Activated CD4-positive, alpha-beta T cell treated with anti-CD3 and anti-CD28 coated beads for 36 hours (primary cell): ENCODE measurements at regions of chr14 and their contacts with region 1.

Region 1: GRCh38 chr14:61694830-61695694 is at the start of gene HIF1A:
- DNase-seq: peak; percentile 99
- ATAC-seq: peak; percentile 87
- H3K4me3 Mint-ChIP-seq: peak within 1 kb of the TSS; percentile 99
- H3K27ac Mint-ChIP-seq: peak within 1 kb of the TSS; percentile 98
- H3K4me1 Mint-ChIP-seq: peaks cover 50% of the 10 kb centered on the region
- H3K27me3 Mint-ChIP-seq: no peaks in the 10 kb centered on the region
- total RNA-seq, gene HIF1A: 196 to 329 TPM

Region 2: GRCh38 chr14:61321385-61322010 is 373.6 kb before region 1 on chr14 and contains the start of gene PRKCH:
- CTCF ChIA-PET with region 1: no interaction called
- POLR2A ChIA-PET with region 1: no interaction called
- intact Hi-C with region 1: loop called (anchors 5 kb)
- DNase-seq: peak; percentile 90
- ATAC-seq: peak; percentile 63
- H3K4me3 Mint-ChIP-seq: peak within 1 kb of the TSS; percentile 92
- H3K27ac Mint-ChIP-seq: peak within 1 kb of the TSS; percentile 94
- H3K4me1 Mint-ChIP-seq: peaks cover 26% of the 10 kb centered on the region
- H3K27me3 Mint-ChIP-seq: no peaks in the 10 kb centered on the region
- total RNA-seq, gene PRKCH: 109 to 145 TPM

Region 3: DNA sequence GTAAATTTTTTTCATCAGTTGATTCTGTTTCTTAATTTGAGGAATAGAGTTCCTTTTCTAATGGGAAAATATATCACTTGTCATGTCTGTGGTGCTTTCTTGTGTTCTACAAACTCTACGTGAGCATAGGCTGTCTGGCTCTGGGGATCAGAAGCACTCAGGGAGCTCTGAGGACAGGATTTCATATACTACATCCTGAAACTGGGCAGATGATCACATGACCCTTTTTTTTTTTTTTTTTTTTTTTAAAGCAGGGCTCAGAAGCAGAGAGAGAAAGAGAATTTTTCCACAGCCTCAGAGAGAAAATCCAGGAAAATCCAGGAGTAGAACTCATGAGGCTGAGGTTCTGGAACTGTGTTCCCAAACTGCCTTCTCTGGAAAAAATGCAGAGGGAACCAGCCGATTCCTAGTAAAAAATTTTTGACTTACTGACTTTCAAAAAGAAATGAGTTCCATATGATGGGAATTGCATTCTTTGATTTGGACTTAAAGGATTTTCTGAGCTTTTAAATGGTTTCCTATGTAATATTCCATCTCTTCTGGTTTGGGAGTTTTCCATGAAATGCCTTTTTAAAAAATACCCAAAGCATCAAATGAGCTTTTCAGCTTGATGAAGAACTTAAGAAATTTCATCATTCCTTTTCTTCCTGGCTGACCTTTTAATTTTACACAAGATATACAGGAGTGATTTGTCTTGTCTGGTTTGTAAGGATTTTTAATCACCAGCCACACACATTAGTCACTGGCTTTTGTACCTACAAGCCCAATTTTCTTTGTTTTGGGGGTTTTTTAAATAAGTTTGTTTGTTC is 182.8 kb before region 1 on chr14:
- CTCF ChIA-PET with region 1: interaction called, 3 read pairs
- POLR2A ChIA-PET with region 1: interaction called, 3 read pairs
- intact Hi-C with region 1: loop called in 1 of 2 experiments (anchors 2 kb)
- DNase-seq: peak; percentile 44
- ATAC-seq: peak; percentile 59
- H3K4me3 Mint-ChIP-seq: peak overlapping the region; percentile 54
- H3K27ac Mint-ChIP-seq: peak overlapping the region; percentile 97
- H3K4me1 Mint-ChIP-seq: peaks cover 94% of the 10 kb centered on the region
- H3K27me3 Mint-ChIP-seq: no peaks in the 10 kb centered on the region

Region 4: DNA sequence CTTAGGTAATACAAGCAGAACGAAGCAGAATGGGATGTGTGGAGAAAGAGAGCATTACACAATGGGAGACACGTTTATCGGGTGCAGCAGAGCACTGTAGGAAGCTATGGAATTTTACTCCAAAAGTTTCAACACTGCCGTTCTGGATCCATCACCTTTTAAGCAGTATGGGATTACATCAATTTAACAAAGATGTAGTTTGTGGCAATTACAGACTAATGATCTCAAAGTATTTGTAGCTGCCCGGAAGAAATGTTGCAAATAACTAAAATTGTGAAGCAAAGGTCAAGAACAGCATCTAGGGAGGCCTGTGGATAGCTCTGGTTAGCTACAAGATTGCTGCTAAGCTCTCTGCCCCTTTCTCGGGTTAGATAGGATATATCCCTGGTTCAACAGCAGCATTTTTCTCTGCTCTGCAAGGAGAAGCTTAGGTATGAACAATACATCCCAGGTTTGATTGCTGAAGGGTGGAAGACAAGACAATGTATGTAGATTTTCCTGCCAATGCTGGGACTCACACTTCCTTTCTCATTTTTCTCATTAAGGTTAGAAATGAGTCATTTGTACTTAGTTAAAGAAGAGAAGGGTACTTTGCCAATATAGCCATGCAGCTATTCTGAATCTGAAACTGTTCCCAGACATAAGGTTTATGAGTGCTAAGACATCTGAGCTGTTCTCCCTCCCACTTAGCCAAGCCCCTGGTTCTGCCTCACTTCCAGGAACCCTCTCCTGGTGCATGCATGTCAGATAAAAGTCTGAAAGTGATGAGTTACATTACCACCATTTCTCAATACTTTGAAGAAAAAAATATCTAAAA is 74.7 kb before region 1 on chr14:
- CTCF ChIA-PET with region 1: no interaction called
- POLR2A ChIA-PET with region 1: interaction called, 4 read pairs
- intact Hi-C with region 1: loop called (anchors 2 kb)
- DNase-seq: peak; percentile 82
- ATAC-seq: peak; percentile 91
- H3K4me3 Mint-ChIP-seq: no peak overlapping the region
- H3K27ac Mint-ChIP-seq: peak overlapping the region; percentile 81
- H3K4me1 Mint-ChIP-seq: peaks cover 79% of the 10 kb centered on the region
- H3K27me3 Mint-ChIP-seq: no peaks in the 10 kb centered on the region

Region 5: DNA sequence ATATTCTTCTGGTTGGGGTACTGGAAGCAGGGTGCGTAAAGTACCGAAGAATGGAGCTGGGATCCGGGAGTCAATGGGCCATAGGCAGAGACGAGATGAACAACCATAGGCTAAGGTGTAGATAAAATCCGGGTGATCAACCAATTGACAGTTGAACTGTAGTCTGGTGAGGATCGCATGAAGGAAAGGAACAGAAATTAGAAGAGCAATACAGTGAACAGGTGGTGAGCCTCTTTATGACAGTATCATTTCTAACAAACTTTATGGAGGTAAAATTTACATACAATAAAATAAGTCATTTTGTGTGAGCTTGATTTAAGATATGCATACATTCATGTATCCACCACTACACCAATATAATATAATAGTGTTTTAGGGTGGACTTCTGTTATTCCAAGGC is 13.6 kb before region 1 on chr14:
- CTCF ChIA-PET with region 1: interaction called, 17 read pairs
- POLR2A ChIA-PET with region 1: interaction called, 6 read pairs
- intact Hi-C with region 1: no loop called
- DNase-seq: no peak
- ATAC-seq: no peak
- H3K4me3 Mint-ChIP-seq: no peak overlapping the region
- H3K27ac Mint-ChIP-seq: no peak overlapping the region
- H3K4me1 Mint-ChIP-seq: peaks cover 12% of the 10 kb centered on the region
- H3K27me3 Mint-ChIP-seq: no peaks in the 10 kb centered on the region

Region 6: GRCh38 chr14:61750708-61751474 is 55.8 kb after region 1 on chr14:
- CTCF ChIA-PET with region 1: interaction called, 4 read pairs
- POLR2A ChIA-PET with region 1: interaction called, 4 read pairs
- intact Hi-C with region 1: loop called in 1 of 2 experiments (anchors 1 kb)
- DNase-seq: peak; percentile 93
- ATAC-seq: peak; percentile 92
- H3K4me3 Mint-ChIP-seq: peak overlapping the region; percentile 97
- H3K27ac Mint-ChIP-seq: peak overlapping the region; percentile 89
- H3K4me1 Mint-ChIP-seq: peaks cover 22% of the 10 kb centered on the region
- H3K27me3 Mint-ChIP-seq: peaks cover 2% of the 10 kb centered on the region